ENCODE measurements at regions of chr17 and their contacts with region 1.

Region 1: GRCh38 chr17:5468075-5468473 is 708 bp downstream of the DHX33 start:
- DNase-seq: no peak
- ATAC-seq: no peak
- H3K4me3 Mint-ChIP-seq: peak overlapping the region; percentile 85
- H3K27ac Mint-ChIP-seq: peak overlapping the region; percentile 47
- H3K4me1 Mint-ChIP-seq: peaks cover 37% of the 10 kb centered on the region
- H3K27me3 Mint-ChIP-seq: no peaks in the 10 kb centered on the region
- CTCF ChIP-seq: no peak

Region 2: DNA sequence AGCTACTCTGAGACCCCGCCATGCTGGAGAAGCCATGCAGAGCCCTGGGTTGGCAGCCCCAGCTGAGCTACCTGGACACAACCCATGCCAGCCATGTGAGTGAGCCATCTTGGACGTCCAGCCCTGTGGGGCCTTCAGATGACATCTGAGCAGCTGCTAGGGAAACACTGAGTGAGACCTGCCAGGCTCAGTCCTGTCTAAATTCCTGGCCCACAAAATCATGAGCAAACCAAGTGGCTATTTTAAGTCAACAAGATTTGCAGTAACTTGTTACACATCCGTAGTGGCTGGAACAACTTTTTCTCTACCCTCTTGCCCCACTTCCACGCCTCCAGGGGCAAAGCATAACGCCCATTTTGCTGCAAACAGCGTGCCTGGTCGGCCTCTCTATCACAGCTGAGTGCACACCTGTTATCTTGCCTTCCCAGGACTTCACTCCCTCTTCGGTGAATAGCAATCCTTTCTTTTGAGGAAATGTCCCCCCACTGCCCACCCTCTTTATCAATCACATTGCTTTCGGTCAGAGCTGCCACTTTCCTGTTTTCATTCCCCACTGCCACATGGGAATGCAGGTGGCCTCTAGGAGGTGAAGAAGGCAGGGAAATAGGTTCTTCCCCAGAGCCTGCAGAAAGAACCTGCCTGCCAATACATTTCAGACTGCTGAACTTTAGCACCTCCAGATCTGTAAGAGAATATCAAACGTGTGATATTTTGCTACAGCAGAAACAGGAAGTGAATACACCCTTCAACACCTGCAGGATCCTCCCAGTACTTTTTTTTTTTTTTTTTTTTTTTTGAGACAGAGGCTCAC is 226.0 kb before region 1 on chr17:
- CTCF ChIA-PET with region 1: no interaction called
- POLR2A ChIA-PET with region 1: no interaction called
- intact Hi-C with region 1: no loop called
- DNase-seq: no peak
- ATAC-seq: peak; percentile 68
- H3K4me3 Mint-ChIP-seq: peak overlapping the region; percentile 78
- H3K27ac Mint-ChIP-seq: peak overlapping the region; percentile 99
- H3K4me1 Mint-ChIP-seq: peaks cover 72% of the 10 kb centered on the region
- H3K27me3 Mint-ChIP-seq: no peaks in the 10 kb centered on the region
- CTCF ChIP-seq: no peak

Region 3: GRCh38 chr17:5419356-5419958 is 48.6 kb before region 1 on chr17 and contains the start of gene NUP88:
- CTCF ChIA-PET with region 1: no interaction called
- POLR2A ChIA-PET with region 1: interaction called, 11 read pairs
- intact Hi-C with region 1: loop called (anchors 1 kb)
- DNase-seq: peak; percentile 87
- ATAC-seq: peak; percentile 86
- H3K4me3 Mint-ChIP-seq: peak within 1 kb of the TSS; percentile 100
- H3K27ac Mint-ChIP-seq: peak within 1 kb of the TSS; percentile 100
- H3K4me1 Mint-ChIP-seq: peaks cover 49% of the 10 kb centered on the region
- H3K27me3 Mint-ChIP-seq: no peaks in the 10 kb centered on the region
- CTCF ChIP-seq: no peak
- total RNA-seq, gene NUP88: 158 and 187 TPM in 2 replicates